ENCODE measurements at regions of chr7 and their contacts with region 1.

Region 1: DNA sequence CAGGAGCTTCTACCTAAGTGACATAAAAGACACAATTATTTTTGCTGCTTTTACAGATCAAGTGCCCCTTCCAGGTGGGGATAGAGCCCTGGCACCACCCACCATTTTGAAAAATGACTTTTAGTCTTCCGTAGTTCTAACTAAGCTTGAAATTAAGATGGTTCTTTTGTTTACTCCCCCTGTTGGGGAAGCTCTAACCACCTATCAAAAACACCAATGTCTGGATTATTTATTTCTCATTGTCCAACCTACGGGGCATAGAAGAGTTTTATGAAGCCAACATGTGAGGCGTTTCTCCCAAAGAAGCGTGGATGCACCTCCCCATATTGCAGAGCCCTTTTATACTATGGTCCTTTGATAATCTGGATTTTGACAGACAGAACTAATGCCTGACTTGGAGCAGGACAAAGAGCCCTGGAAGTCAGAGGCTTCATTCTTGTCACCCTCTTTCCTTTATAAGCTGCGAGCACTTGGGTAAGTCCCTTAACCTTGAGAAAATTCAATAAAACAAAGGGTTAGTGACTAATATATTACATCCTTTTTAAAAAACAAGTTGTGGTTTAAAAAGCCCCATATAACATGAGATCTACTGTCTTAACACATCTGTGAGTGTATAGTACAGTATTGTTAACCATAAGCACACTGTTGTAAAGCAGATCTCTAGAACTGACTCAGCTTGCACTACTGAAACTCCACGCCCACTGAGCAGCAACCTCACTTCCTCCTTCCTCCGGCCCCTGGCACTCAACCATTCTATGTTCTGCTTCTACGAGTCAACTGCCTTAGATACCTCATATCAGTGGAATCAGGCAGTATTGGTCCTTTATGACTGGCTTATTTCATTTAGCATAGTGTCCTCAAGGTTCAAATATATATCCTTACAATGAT is 67.5 kb downstream of the ATXN7L1 start:
- DNase-seq: peak; percentile 77
- H3K4me3 Mint-ChIP-seq: peak overlapping the region; percentile 45
- H3K27ac Mint-ChIP-seq: peak overlapping the region; percentile 75
- H3K4me1 Mint-ChIP-seq: peaks cover 77% of the 10 kb centered on the region
- H3K27me3 Mint-ChIP-seq: peaks cover 1% of the 10 kb centered on the region

Region 2: GRCh38 chr7:105013221-105013815 is 795.6 kb before region 1 on chr7:
- intact Hi-C with region 1: loop called (anchors 2 kb)
- DNase-seq: peak; percentile 92
- H3K4me3 Mint-ChIP-seq: peak overlapping the region; percentile 99
- H3K27ac Mint-ChIP-seq: peak overlapping the region; percentile 96
- H3K4me1 Mint-ChIP-seq: peaks cover 43% of the 10 kb centered on the region
- H3K27me3 Mint-ChIP-seq: peaks cover 3% of the 10 kb centered on the region

Region 3: DNA sequence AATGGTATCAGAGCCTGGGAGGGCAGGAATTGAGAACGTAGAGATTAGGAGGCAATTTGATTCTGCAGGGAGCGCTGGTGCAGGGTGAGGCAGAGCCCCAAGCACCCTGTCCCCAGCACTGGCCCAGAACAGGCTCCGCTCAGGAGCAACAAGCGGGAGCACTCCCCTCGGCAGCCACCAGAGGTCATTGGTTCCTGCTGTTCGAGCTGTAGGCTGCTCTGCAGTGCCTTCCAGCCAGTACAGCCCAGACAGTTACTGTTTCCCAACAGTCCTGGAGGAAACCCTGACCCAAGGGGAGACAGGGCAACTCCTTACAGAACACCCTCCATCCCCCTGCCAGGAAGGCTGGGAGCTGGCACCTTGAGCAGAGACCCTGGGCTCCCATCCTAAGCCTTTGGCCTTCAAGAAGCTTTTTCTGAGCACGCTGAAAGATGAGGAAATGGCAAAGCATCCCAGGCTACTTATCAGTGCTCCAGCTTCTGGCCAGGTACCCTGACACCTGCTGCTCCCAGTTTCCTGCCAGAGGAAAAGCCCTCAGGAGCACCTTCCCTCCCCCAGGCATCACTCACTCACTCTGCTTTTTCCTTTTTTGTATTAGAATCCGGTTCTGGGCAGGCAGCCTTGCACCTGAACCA is 156.5 kb before region 1 on chr7:
- intact Hi-C with region 1: no loop called
- DNase-seq: peak; percentile 41
- H3K4me3 Mint-ChIP-seq: no peak overlapping the region
- H3K27ac Mint-ChIP-seq: no peak overlapping the region
- H3K4me1 Mint-ChIP-seq: peaks cover 16% of the 10 kb centered on the region
- H3K27me3 Mint-ChIP-seq: no peaks in the 10 kb centered on the region

Region 4: GRCh38 chr7:105759670-105760550 is 49.0 kb before region 1 on chr7:
- intact Hi-C with region 1: loop called (anchors 1 kb)
- DNase-seq: no peak
- H3K4me3 Mint-ChIP-seq: no peak overlapping the region
- H3K27ac Mint-ChIP-seq: no peak overlapping the region
- H3K4me1 Mint-ChIP-seq: peaks cover 26% of the 10 kb centered on the region
- H3K27me3 Mint-ChIP-seq: peaks cover 12% of the 10 kb centered on the region

Region 5: DNA sequence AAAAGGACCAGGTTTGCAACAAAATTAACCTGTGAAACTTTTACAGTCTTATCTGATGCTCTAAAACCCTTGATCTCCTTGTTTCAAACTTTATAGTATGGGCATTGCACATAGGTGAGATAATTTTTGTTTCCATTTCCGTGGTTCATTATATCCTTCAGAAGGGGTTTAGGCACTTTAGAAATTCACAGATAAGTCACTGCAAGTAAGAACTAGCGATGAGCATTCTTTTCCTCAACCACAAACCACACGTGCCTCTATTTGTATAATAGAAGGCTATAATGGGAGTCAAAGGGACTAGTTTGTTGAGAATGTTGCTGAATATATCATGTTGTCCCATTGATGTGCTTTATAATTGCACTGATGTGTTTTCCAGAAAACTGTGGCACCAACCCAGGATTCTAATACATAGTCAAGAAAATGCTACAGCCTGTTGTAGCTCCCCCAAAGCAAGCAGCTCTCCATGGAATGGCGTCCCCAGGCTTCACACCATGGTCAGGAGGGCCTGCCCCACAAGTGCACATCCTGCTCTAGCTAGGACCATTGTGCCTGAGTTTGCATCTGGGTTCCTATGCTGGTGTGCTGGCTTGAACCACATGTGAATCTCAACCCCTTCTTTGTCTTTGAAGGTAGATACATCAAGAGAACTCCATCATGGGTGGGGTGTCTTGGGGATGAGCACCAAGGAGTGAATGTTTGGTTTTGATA is 81.5 kb after region 1 on chr7:
- intact Hi-C with region 1: loop called (anchors 1 kb)
- DNase-seq: no peak
- H3K4me3 Mint-ChIP-seq: no peak overlapping the region
- H3K27ac Mint-ChIP-seq: no peak overlapping the region
- H3K4me1 Mint-ChIP-seq: peaks cover 10% of the 10 kb centered on the region
- H3K27me3 Mint-ChIP-seq: peaks cover 9% of the 10 kb centered on the region

Region 6: GRCh38 chr7:106112117-106112971 is 303.4 kb after region 1 on chr7 and contains the start of gene SYPL1:
- intact Hi-C with region 1: loop called (anchors 5 kb)
- DNase-seq: peak; percentile 86
- H3K4me3 Mint-ChIP-seq: peak within 1 kb of the TSS; percentile 86
- H3K27ac Mint-ChIP-seq: peak within 1 kb of the TSS; percentile 88
- H3K4me1 Mint-ChIP-seq: peaks cover 47% of the 10 kb centered on the region
- H3K27me3 Mint-ChIP-seq: no peaks in the 10 kb centered on the region
- total RNA-seq, gene SYPL1: 22.3 and 24.9 TPM in 2 replicates

Region 7: GRCh38 chr7:106485031-106485551 is 676.1 kb after region 1 on chr7:
- intact Hi-C with region 1: loop called (anchors 5 kb)
- DNase-seq: no peak
- H3K4me3 Mint-ChIP-seq: peak overlapping the region; percentile 19
- H3K27ac Mint-ChIP-seq: peak overlapping the region; percentile 81
- H3K4me1 Mint-ChIP-seq: peaks cover 41% of the 10 kb centered on the region
- H3K27me3 Mint-ChIP-seq: no peaks in the 10 kb centered on the region

Region 8: GRCh38 chr7:106609416-106609815 is 800.5 kb after region 1 on chr7:
- intact Hi-C with region 1: no loop called
- DNase-seq: no peak
- H3K4me3 Mint-ChIP-seq: no peak overlapping the region
- H3K27ac Mint-ChIP-seq: no peak overlapping the region
- H3K4me1 Mint-ChIP-seq: no peaks in the 10 kb centered on the region
- H3K27me3 Mint-ChIP-seq: no peaks in the 10 kb centered on the region